Posterior vena cava (tissue), 2 donors: ENCODE measurements at regions of chr10 and their contacts with region 1.

Region 1: DNA sequence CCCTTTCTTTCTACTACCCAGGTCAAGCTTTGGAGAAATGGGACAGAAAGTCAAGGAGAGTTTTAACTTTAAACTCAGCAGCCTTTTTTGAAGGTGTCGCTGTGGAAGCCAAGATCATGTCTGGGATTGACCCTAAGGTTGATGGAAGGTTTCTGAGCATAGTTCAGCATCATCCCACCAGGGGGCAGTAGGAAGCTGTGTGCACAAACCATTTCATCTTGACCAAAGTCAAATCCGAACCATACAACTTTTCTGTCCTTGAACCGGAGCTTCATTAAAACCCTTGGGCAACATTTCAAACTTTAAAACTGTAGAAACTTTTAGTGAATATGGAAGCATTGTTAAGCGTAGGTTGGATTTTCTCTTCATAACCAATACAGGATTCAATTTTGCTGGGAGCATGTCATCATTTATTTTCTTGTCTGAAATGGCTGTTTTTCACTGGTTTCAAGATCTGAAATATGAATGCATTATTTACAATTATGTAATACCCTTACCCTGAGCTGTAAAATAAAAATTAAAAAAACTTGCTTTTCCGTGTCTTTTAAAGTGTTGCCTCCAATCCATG is 214.4 kb upstream of the KIAA1217 start:
- DNase-seq: no peak

Region 2: GRCh38 chr10:24197263-24197662 is 202.7 kb after region 1 on chr10:
- intact Hi-C with region 1: loop called (anchors 5 kb)
- DNase-seq: no peak

Region 3: DNA sequence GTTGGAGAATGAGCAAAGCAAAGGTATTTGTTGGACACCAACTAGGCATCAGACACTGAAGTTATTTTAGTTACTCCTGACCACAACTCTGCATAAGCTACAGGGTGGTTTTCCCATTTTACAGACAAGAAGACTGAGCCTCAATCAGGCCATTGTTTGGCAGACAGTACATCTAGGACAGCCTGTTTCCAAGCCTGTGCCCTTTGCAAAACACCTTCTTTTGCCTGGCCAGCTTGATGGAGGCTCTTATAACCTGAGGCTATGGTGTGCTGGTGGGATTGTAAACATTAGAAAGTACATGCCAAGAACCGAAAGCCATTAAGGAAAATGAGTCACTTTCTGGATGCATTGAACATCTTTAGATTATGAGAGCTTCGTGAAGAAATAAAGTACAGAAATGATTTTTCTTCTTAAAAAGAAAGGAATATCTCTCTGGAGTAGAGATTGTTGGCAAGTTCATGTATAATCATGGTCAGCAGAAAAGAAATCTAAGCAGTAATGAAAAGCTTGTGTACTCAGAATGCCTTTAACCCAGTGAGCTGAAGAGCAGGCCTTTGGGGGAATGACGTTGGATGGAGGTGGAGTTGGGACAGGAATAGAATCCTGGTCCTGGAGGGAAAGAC is 354.9 kb after region 1 on chr10:
- intact Hi-C with region 1: loop called in 1 of 2 experiments (anchors 10 kb)
- DNase-seq: no peak

Region 4: GRCh38 chr10:24374134-24374915 is 379.8 kb after region 1 on chr10:
- intact Hi-C with region 1: loop called in 1 of 2 experiments (anchors 10 kb)
- DNase-seq: no peak

Region 5: GRCh38 chr10:24989867-24990266 is 995.3 kb after region 1 on chr10:
- intact Hi-C with region 1: loop called in 1 of 2 experiments (anchors 5 kb)
- DNase-seq: no peak